ENCODE measurements at regions of chr13 and their contacts with region 1.

Region 1: GRCh38 chr13:20197361-20197834 is 4.7 kb upstream of the GJB2 start:
- DNase-seq: no peak
- H3K4me3 ChIP-seq: no peak overlapping the region
- H3K27me3 ChIP-seq: peaks cover 28% of the 10 kb centered on the region
- CTCF ChIP-seq: peak; percentile 81

Region 2: DNA sequence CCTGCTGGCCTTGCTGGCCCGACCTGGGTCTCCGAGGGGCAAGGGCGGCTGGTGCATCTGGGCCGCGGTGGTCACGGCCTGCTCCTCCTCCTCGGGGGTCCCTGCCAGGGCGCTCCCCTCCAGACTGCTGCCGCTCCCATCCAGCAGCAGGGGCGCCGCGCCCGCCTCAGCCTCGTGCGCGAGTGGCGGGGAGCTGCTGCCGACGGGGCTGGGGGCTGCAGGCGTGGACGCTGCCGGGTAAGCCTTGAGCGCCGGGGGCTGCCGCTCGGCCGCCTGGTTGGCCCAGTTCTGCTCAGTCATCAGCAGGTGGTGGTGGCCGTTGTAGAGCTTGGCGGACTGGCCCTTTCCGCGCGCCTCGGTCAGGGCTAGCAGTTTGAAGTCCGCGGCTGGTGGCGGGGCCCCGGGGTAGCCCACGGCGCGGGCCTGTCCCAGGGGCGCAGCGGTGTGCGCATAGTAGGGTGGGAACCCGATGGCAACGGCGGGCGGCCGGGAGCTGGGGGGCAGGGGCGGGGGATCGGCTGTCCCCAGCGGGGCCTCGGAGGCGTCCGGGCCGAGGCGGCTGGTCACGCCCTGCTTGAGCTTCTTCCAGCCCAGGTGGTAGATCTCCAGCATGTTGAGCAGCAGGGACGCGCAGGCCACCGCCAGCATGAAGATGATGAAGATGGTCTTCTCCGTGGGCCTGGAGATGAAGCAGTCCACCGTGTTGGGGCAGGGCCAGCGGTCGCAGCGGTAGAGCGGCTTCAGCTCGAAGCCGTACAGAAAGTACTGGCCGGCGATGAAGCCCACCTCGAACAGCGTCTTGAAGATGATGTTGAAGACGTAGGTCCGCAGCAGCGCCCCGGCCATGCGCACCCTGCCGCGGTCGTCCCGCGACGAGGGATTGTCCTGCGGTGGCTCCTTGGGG is 55.1 kb before region 1 on chr13:
- CTCF ChIA-PET with region 1: no interaction called
- POLR2A ChIA-PET with region 1: no interaction called
- DNase-seq: no peak
- H3K4me3 ChIP-seq: no peak overlapping the region
- H3K27me3 ChIP-seq: peaks cover 34% of the 10 kb centered on the region
- CTCF ChIP-seq: no peak

Region 3: DNA sequence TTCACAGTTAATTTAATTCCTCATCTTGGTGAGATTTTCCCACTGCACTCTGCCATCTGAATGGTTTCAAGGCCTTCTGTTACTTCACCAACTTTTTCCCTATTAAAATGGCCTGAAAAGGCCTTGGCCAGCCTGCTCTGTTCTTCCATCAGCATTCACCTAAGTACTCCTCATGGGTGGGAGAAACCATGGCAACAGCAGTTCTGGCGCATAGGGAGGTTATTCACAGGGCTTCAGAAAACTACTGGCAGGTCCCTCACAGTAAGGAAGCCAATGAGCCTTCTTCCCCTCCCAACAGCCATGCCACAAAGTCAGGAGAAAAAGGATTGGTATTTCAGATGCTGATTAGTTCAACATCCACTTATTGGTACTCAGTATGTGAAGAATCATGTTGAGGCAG is 12.6 kb after region 1 on chr13:
- CTCF ChIA-PET with region 1: interaction called, 10 read pairs
- POLR2A ChIA-PET with region 1: no interaction called
- DNase-seq: no peak
- H3K4me3 ChIP-seq: no peak overlapping the region
- H3K27me3 ChIP-seq: peaks cover 9% of the 10 kb centered on the region
- CTCF ChIP-seq: no peak

Measured in BJ (cell line).